ENCODE measurements at regions of chr3 and their contacts with region 1.

Region 1: GRCh38 chr3:129934234-129935123 is 40.0 kb upstream of the TRH start:
- DNase-seq: no peak
- ATAC-seq: peak in 6 of 8 donors; percentile 56 to 65 (median 61)
- H3K4me3 ChIP-seq: peak overlapping the region in 5 of 10 donors; percentile 12 to 44 (median 32)
- H3K27ac ChIP-seq: no peak overlapping the region
- H3K4me1 ChIP-seq: peaks cover 0 to 5% (median 0%) of the 10 kb centered on the region in 9 donors
- H3K27me3 ChIP-seq: peaks cover 0 to 5% (median 0%) of the 10 kb centered on the region in 7 donors
- CTCF ChIP-seq: peak; percentile 85 to 94 (median 92)

Region 2: DNA sequence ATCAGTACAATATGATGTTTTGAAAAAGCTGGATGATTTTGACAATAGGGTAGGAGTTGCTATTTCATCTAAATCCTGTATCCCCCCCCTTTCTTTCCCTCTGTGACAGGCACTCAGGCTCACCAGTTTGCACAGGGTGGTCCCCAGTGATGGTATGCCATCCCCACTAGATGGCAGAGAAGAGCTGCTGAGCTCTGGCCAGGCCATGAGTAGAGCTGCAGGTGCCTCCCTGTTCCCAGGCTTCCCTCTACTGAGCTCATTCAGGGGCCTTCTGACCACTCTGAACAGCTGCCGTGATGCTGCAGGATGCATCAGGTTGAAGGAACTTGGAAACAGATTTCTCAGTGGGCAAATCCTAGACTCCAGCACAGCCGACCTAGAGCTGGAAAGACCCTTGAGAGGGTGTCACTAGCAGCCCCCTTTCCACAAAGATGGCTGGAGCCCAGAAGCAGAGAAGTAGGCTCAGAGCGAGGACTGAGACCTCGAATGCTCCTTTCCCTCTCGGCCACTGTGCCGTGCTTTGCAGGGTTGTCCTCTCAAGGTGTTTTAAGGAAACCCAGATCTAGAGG is 551.1 kb before region 1 on chr3:
- intact Hi-C with region 1: loop called in 1 of 10 experiments (anchors 10 kb)
- DNase-seq: peak in 1 of 2 donors; percentile 55
- ATAC-seq: peak; percentile 84 to 90 (median 86)
- H3K4me3 ChIP-seq: no peak overlapping the region
- H3K27ac ChIP-seq: no peak overlapping the region
- H3K4me1 ChIP-seq: peaks cover 0 to 27% (median 17%) of the 10 kb centered on the region in 9 donors
- H3K27me3 ChIP-seq: no peaks in the 10 kb centered on the region
- CTCF ChIP-seq: peak; percentile 63 to 83 (median 77)

Region 3: DNA sequence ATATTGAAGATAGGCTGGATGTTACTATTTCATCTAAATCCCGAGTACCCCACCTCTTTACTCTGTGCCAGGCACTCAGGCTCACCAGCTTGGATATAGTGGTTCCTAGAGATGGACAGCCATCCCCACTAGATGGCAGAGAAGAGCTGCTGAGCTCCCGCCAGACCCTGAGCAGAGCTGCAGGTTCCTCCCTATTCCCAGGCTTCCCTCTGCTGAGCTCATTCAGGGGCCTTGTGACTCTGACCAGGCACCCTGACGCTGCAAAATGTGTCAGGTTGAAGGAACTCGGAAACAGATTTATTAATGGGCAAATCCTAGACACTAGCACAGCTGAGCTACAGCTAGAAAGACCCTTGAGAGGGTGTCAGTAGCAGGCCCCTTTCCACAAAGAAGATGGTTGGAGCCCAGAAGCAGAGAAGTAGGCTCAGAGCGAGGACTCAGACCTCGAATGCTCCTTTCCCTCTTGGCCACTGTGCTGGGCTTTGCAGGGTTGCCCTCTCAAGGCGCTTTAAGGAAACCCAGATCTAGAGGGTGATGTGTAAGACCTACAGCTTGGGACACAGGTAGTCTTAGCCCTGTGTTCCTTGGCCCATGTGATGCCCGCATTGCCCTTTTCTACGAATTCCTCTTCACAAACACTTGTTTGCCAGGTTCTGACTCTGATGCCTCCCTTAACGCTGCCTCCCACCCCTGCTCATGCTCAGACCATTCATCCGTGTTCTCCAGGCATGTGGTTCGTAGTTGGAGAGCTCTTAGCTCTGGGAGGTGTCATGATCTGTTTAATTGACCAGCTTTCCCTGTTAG is 444.0 kb before region 1 on chr3:
- intact Hi-C with region 1: loop called in 6 of 10 experiments (anchors 5 to 10 kb)
- DNase-seq: peak; percentile 79 to 88
- ATAC-seq: peak; percentile 88 to 94 (median 91)
- H3K4me3 ChIP-seq: no peak overlapping the region
- H3K27ac ChIP-seq: peak overlapping the region in 9 of 10 donors; percentile 54 to 87 (median 76)
- H3K4me1 ChIP-seq: peaks cover 14 to 66% (median 40%) of the 10 kb centered on the region in 9 donors
- H3K27me3 ChIP-seq: no peaks in the 10 kb centered on the region
- CTCF ChIP-seq: peak; percentile 78 to 96 (median 90)

Region 4: DNA sequence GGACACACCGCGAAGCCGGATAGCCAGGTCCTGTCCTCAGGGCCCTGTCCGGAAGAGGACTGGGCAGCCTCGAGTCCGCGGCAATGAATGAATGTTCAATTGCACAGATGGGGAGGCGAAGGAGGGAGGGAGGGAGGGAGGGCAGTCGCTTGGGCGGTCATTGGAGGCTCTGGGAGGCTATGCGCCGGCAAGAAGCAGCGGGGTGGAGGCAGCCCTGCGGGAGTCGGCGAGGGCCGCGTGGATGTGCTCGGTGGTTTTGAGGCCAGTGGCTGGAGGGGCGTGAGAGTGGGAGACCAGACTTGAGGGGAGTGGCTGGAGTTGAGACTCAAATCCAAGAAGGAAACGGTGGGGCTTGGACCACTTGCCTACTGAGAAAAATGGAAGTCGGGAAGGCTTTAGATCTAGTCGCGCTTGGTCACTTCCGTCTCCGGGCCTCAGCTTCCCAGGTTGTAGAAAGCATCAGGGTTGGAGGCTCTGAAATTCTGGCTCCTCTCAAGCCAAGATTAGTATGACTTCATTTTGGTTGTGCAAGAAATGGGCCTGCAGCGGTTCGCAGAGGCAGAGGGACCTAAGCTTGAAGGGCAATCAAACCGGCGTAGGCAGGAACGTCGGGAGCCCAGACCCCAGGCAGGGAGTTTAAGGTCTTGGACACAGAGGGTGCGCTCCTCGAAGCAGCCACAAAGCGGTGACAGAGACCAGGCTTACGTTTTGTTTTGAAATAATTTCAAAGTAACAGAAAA is 306.9 kb before region 1 on chr3:
- intact Hi-C with region 1: loop called (anchors 1 to 10 kb)
- DNase-seq: peak; percentile 72 to 77
- ATAC-seq: peak; percentile 19 to 61 (median 55)
- H3K4me3 ChIP-seq: peak overlapping the region; percentile 26 to 79 (median 66)
- H3K27ac ChIP-seq: peak overlapping the region; percentile 95 to 100 (median 99)
- H3K4me1 ChIP-seq: peaks cover 30 to 64% (median 53%) of the 10 kb centered on the region in 9 donors
- H3K27me3 ChIP-seq: no peaks in the 10 kb centered on the region
- CTCF ChIP-seq: peak; percentile 67 to 93 (median 79)

Region 5: GRCh38 chr3:129633751-129634392 is 300.6 kb before region 1 on chr3:
- intact Hi-C with region 1: loop called in 8 of 10 experiments (anchors 2 to 10 kb)
- DNase-seq: no peak
- ATAC-seq: peak in 1 of 8 donors; percentile 7
- H3K4me3 ChIP-seq: no peak overlapping the region
- H3K27ac ChIP-seq: no peak overlapping the region
- H3K4me1 ChIP-seq: peaks cover 0 to 2% (median 0%) of the 10 kb centered on the region in 9 donors
- H3K27me3 ChIP-seq: no peaks in the 10 kb centered on the region
- CTCF ChIP-seq: no peak

Region 6: DNA sequence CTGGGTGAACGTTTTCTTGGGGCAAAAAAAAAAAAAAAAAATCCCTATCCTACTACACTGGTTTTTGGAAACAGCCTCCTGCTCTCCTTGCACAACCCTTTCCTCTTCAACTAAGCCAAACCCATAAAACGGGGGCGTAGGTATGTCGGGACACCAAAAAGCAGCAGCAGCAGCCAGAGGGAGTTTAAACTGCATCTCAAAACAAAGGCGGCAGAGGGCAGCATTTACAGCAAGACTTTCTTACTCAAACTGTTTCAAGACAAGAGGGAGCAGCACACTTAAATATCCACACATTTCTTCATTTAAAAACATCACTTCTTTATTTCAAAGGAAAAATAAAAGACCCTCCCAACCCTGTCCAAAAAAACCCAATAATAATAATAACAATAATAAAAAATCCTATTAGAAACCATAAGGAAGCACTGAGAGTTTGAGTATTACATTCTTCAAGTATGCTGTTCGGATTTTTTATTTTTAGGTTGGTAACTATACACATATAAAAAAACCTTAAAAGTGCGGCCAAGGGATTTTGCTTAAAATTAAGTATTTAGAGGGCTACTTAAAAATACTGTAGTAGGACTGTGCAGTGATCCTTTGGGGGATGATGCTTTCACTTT is 284.1 kb before region 1 on chr3:
- intact Hi-C with region 1: loop called in 5 of 10 experiments (anchors 2 to 5 kb)
- DNase-seq: peak in 1 of 2 donors; percentile 73
- ATAC-seq: peak in 7 of 8 donors; percentile 64 to 92 (median 73)
- H3K4me3 ChIP-seq: no peak overlapping the region
- H3K27ac ChIP-seq: no peak overlapping the region
- H3K4me1 ChIP-seq: peaks cover 0 to 30% (median 21%) of the 10 kb centered on the region in 9 donors
- H3K27me3 ChIP-seq: no peaks in the 10 kb centered on the region
- CTCF ChIP-seq: peak; percentile 51 to 84 (median 73)

Region 7: GRCh38 chr3:129801354-129801753 is 133.1 kb before region 1 on chr3:
- intact Hi-C with region 1: no loop called
- DNase-seq: no peak
- ATAC-seq: no peak
- H3K4me3 ChIP-seq: no peak overlapping the region
- H3K27ac ChIP-seq: no peak overlapping the region
- H3K4me1 ChIP-seq: no peaks in the 10 kb centered on the region
- H3K27me3 ChIP-seq: no peaks in the 10 kb centered on the region
- CTCF ChIP-seq: no peak

Measured in heart right ventricle (tissue), 16 donors.